GM12878 (cell line): ENCODE measurements at regions of chr16 and their contacts with region 1.

Region 1: GRCh38 chr16:71507061-71507460 is 17.9 kb upstream of the ZNF19 start:
- DNase-seq: no peak
- ATAC-seq: no peak
- H3K4me3 ChIP-seq: no peak overlapping the region
- H3K27ac ChIP-seq: no peak overlapping the region
- H3K4me1 ChIP-seq: no peaks in the 10 kb centered on the region
- H3K27me3 ChIP-seq: no peaks in the 10 kb centered on the region
- CTCF ChIP-seq: no peak
- EP300 ChIP-seq: no peak
- POLR2A ChIP-seq: no peak
- RAD21 ChIP-seq: no peak

Region 2: DNA sequence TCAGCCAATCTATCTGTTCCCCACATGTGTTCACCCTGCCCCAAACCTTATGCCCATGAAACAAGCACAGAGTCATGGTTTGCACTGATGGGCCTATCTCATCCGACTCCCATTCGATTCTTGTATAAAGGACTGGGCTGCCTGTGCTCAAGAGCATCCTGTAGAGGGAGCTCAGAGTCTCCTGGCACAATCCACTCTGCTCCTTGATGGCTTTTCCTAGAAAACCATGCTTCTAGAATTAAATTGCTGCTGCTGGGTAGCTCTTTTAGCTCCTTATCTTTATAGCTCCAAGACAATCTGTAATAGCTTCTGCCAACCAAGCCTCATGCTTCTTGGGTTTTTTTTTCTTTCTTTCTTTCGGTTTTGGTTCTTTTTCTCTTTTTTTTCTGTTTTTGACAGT is 27.6 kb before region 1 on chr16:
- CTCF ChIA-PET with region 1: no interaction called
- POLR2A ChIA-PET with region 1: no interaction called
- RAD21 ChIA-PET with region 1: no interaction called
- SMC1A ChIA-PET with region 1: no interaction called
- in situ Hi-C with region 1: no loop called
- intact Hi-C with region 1: no loop called
- DNase-seq: no peak
- ATAC-seq: 0 out of 3 replicates have a peak, but pooled peaks have one; percentile 17
- H3K4me3 ChIP-seq: no peak overlapping the region
- H3K27ac ChIP-seq: no peak overlapping the region
- H3K4me1 ChIP-seq: peaks cover 3% of the 10 kb centered on the region
- H3K27me3 ChIP-seq: no peaks in the 10 kb centered on the region
- CTCF ChIP-seq: peak; percentile 40 to 45 (median 44); a peak in 5 of 6 replicates
- EP300 ChIP-seq: no peak
- POLR2A ChIP-seq: no peak
- RAD21 ChIP-seq: peak; percentile 24; the same call in 1 of the 2 replicates

Region 3: DNA sequence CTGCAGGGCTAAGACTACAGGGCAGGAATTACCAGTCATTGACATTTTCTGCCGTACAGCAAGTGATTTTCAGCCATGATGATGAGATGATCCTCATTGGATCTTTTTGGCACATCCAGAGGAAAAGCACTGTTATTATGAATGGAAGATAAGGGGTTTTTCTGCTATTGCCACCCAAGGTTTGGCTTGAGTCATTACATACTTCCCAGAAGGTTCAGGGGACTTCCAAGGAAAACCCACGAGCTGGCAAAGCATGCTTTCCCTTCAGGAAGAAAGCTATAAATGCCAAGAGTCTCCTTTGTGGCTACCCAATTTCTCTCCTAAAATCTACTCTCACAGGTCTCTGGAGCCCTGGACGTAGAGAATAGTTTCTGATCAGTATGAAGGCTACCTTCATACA is 25.3 kb after region 1 on chr16:
- CTCF ChIA-PET with region 1: interaction called, 134 read pairs
- POLR2A ChIA-PET with region 1: no interaction called
- RAD21 ChIA-PET with region 1: interaction called, 6 read pairs
- SMC1A ChIA-PET with region 1: interaction called, 20 read pairs
- in situ Hi-C with region 1: no loop called
- intact Hi-C with region 1: loop called (anchors 2 kb)
- DNase-seq: no peak
- ATAC-seq: no peak
- H3K4me3 ChIP-seq: no peak overlapping the region
- H3K27ac ChIP-seq: no peak overlapping the region
- H3K4me1 ChIP-seq: no peaks in the 10 kb centered on the region
- H3K27me3 ChIP-seq: no peaks in the 10 kb centered on the region
- CTCF ChIP-seq: no peak
- EP300 ChIP-seq: no peak
- POLR2A ChIP-seq: no peak
- RAD21 ChIP-seq: no peak

Region 4: GRCh38 chr16:72355561-72355960 is 848.5 kb after region 1 on chr16:
- CTCF ChIA-PET with region 1: no interaction called
- POLR2A ChIA-PET with region 1: no interaction called
- RAD21 ChIA-PET with region 1: no interaction called
- SMC1A ChIA-PET with region 1: no interaction called
- in situ Hi-C with region 1: no loop called
- intact Hi-C with region 1: no loop called
- DNase-seq: no peak
- ATAC-seq: no peak
- H3K4me3 ChIP-seq: no peak overlapping the region
- H3K27ac ChIP-seq: no peak overlapping the region
- H3K4me1 ChIP-seq: no peaks in the 10 kb centered on the region
- H3K27me3 ChIP-seq: no peaks in the 10 kb centered on the region
- CTCF ChIP-seq: no peak
- EP300 ChIP-seq: no peak
- POLR2A ChIP-seq: no peak
- RAD21 ChIP-seq: no peak